Ascending aorta (tissue), 2 donors: ENCODE measurements at regions of chr12 and their contacts with region 1.

Region 1: GRCh38 chr12:112382232-112382796 is at the start of gene HECTD4:
- DNase-seq: peak; percentile 75 to 97
- H3K4me3 ChIP-seq: peak within 1 kb of the TSS; percentile 78 to 99
- H3K27ac ChIP-seq: peak within 1 kb of the TSS; percentile 68 to 69
- H3K4me1 ChIP-seq: peaks cover 0 to 16% of the 10 kb centered on the region in 2 donors
- H3K27me3 ChIP-seq: no peaks in the 10 kb centered on the region
- CTCF ChIP-seq: no peak
- total RNA-seq, gene HECTD4: 23.7 TPM

Region 2: GRCh38 chr12:111942557-111942956 is 439.8 kb before region 1 on chr12:
- intact Hi-C with region 1: loop called (anchors 10 kb)
- DNase-seq: no peak
- H3K4me3 ChIP-seq: no peak overlapping the region
- H3K27ac ChIP-seq: no peak overlapping the region
- H3K4me1 ChIP-seq: peaks cover 0 to 7% of the 10 kb centered on the region in 2 donors
- H3K27me3 ChIP-seq: no peaks in the 10 kb centered on the region
- CTCF ChIP-seq: no peak

Region 3: DNA sequence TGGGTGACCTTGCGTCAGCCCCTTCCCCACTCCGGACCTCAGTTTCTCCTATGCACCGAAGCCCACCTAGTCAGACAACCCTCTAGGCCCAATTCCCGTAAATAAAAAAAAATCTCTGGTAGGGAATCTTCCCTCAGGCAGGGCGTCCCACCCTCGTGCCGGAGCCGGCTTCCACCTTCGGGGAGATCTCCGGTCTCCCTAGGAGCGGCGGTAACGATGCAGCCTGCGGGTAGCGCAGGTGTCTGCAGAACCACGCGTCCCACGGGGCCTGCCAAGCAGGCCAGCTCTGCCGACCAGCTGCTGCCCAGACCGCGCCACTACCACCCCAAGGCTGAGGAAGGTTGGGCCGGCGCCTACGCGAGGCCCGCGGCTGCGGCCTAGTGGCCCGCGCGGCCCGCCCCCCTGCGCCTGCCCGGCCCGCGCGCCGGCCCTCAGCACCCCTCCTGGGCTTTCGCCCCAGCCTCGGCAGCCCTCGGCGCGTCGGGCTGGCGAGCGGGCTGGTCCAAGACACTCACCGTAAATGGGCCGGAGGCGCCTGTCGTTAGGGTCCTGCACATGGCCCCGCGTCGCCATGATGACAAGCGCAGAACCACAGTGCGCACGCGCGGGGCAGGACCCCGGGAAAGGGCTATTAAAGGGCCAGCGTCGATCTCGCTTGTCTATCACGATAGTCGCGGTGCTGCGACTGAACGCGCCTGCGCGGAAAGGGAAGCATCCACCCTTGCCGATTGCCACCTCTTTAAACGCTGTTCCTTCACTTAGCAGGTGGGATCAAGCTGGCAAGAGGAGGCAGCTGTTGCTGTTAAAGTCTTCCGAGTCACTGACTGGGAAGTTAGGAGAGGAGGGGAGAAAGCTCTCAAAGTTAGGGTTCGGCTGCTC is 273.9 kb before region 1 on chr12 and contains the start of gene NAA25:
- intact Hi-C with region 1: loop called (anchors 5 kb)
- DNase-seq: peak; percentile 59 to 94
- H3K4me3 ChIP-seq: peak within 1 kb of the TSS; percentile 83 to 91
- H3K27ac ChIP-seq: peak within 1 kb of the TSS; percentile 97 to 98
- H3K4me1 ChIP-seq: peaks cover 0 to 16% of the 10 kb centered on the region in 2 donors
- H3K27me3 ChIP-seq: no peaks in the 10 kb centered on the region
- CTCF ChIP-seq: no peak
- total RNA-seq, gene NAA25: 1.9 TPM

Region 4: DNA sequence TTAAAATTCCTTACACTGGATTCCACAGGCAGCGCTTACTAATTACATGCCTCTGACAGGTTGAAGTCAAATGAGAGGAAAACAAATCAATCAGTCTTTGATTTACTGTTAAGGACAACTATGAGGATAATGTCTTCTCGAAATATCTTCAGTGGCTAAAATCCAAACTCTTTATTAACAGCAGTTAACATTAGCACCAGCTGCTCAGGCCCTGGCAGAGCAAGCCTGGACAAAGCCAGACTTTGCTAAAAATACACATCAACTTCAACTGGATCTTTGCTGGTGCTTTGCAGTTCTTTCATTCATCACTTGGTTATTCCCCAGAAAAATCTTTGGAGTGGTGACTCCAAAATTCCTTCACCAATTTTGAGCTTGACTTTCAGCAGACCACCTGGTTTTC is 98.8 kb before region 1 on chr12:
- intact Hi-C with region 1: loop called (anchors 10 kb)
- DNase-seq: no peak
- H3K4me3 ChIP-seq: no peak overlapping the region
- H3K27ac ChIP-seq: no peak overlapping the region
- H3K4me1 ChIP-seq: no peaks in the 10 kb centered on the region
- H3K27me3 ChIP-seq: no peaks in the 10 kb centered on the region
- CTCF ChIP-seq: no peak

Region 5: GRCh38 chr12:112409064-112409905 is 27.0 kb after region 1 on chr12 and contains the start of gene RPL6:
- intact Hi-C with region 1: loop called (anchors 2 kb)
- DNase-seq: peak; percentile 30 to 92
- H3K4me3 ChIP-seq: peak within 1 kb of the TSS; percentile 67 to 76
- H3K27ac ChIP-seq: peak within 1 kb of the TSS; percentile 79 to 90
- H3K4me1 ChIP-seq: peaks cover 0 to 14% of the 10 kb centered on the region in 2 donors
- H3K27me3 ChIP-seq: no peaks in the 10 kb centered on the region
- CTCF ChIP-seq: no peak
- total RNA-seq, gene RPL6: 951 TPM